PC-9 (cell line): ENCODE measurements at regions of chr9 and their contacts with region 1.

Region 1: GRCh38 chr9:113578882-113579282 is 115.4 kb downstream of the RGS3 start:
- DNase-seq: peak; percentile 91 to 92
- H3K4me3 ChIP-seq: peak overlapping the region; percentile 45; the same call in 1 of the 2 replicates
- H3K27ac ChIP-seq: peak overlapping the region; percentile 93
- H3K4me1 ChIP-seq: peaks cover 73% of the 10 kb centered on the region
- H3K27me3 ChIP-seq: no peaks in the 10 kb centered on the region
- CTCF ChIP-seq: no peak

Region 2: GRCh38 chr9:113221003-113221799 is 357.7 kb before region 1 on chr9 and contains the starts of genes FKBP15 and SLC31A1:
- CTCF ChIA-PET with region 1: interaction called, 3 read pairs
- POLR2A ChIA-PET with region 1: no interaction called
- intact Hi-C with region 1: loop called (anchors 5 kb)
- DNase-seq: peak; percentile 95 to 99
- H3K4me3 ChIP-seq: peak within 1 kb of the TSS; percentile 79
- H3K27ac ChIP-seq: peak within 1 kb of the TSS; percentile 51
- H3K4me1 ChIP-seq: peaks cover 29% of the 10 kb centered on the region
- H3K27me3 ChIP-seq: no peaks in the 10 kb centered on the region
- CTCF ChIP-seq: no peak
- total RNA-seq, gene FKBP15: 23.3 and 33.5 TPM in 2 replicates
- total RNA-seq, gene SLC31A1: 24.9 and 27.2 TPM in 2 replicates

Region 3: GRCh38 chr9:113340017-113340699 is 238.7 kb before region 1 on chr9 and contains the start of gene WDR31:
- CTCF ChIA-PET with region 1: no interaction called
- POLR2A ChIA-PET with region 1: no interaction called
- intact Hi-C with region 1: loop called (anchors 1 kb)
- DNase-seq: peak; percentile 68 to 93
- H3K4me3 ChIP-seq: peak within 1 kb of the TSS; percentile 80
- H3K27ac ChIP-seq: peak within 1 kb of the TSS; percentile 81
- H3K4me1 ChIP-seq: peaks cover 43% of the 10 kb centered on the region
- H3K27me3 ChIP-seq: no peaks in the 10 kb centered on the region
- CTCF ChIP-seq: no peak
- total RNA-seq, gene WDR31: 11.2 and 12.9 TPM in 2 replicates

Region 4: DNA sequence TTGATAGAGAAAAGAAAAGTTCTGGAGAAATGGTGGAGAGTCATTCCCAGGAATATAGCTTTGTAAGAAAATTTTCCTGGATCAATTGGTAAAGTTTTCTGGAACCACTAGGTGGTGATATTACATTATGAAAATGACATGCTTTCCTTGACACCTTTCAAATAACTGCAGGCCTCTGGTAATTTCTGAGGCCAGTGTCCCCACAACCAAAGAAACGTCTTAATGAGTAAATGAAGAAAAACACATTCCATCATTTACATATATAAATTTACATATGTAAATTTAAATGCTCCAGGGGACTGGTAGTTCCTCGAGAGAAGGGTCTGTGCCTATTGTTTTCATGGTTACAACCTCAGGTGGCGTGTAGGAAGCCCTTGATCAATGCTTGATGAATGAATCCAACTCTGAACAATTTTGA is 132.6 kb before region 1 on chr9:
- CTCF ChIA-PET with region 1: no interaction called
- POLR2A ChIA-PET with region 1: interaction called, 36 read pairs
- intact Hi-C with region 1: no loop called
- DNase-seq: no peak
- H3K4me3 ChIP-seq: no peak overlapping the region
- H3K27ac ChIP-seq: no peak overlapping the region
- H3K4me1 ChIP-seq: no peaks in the 10 kb centered on the region
- H3K27me3 ChIP-seq: no peaks in the 10 kb centered on the region
- CTCF ChIP-seq: peak; percentile 80

Region 5: GRCh38 chr9:113548221-113549041 is 30.5 kb before region 1 on chr9:
- CTCF ChIA-PET with region 1: no interaction called
- POLR2A ChIA-PET with region 1: interaction called, 3 read pairs
- intact Hi-C with region 1: loop called (anchors 1 kb)
- DNase-seq: peak in 1 of 2 experiments; percentile 82
- H3K4me3 ChIP-seq: no peak overlapping the region
- H3K27ac ChIP-seq: peak overlapping the region; percentile 38
- H3K4me1 ChIP-seq: peaks cover 11% of the 10 kb centered on the region
- H3K27me3 ChIP-seq: no peaks in the 10 kb centered on the region
- CTCF ChIP-seq: no peak

Region 6: GRCh38 chr9:113622600-113623400 is 43.9 kb after region 1 on chr9:
- CTCF ChIA-PET with region 1: no interaction called
- POLR2A ChIA-PET with region 1: no interaction called
- intact Hi-C with region 1: loop called (anchors 1 kb)
- DNase-seq: peak; percentile 86
- H3K4me3 ChIP-seq: no peak overlapping the region
- H3K27ac ChIP-seq: peak overlapping the region; percentile 56
- H3K4me1 ChIP-seq: peaks cover 42% of the 10 kb centered on the region
- H3K27me3 ChIP-seq: no peaks in the 10 kb centered on the region
- CTCF ChIP-seq: no peak

Region 7: GRCh38 chr9:113973851-113974413 is 395.1 kb after region 1 on chr9:
- CTCF ChIA-PET with region 1: no interaction called
- POLR2A ChIA-PET with region 1: no interaction called
- intact Hi-C with region 1: no loop called
- DNase-seq: no peak
- H3K4me3 ChIP-seq: no peak overlapping the region
- H3K27ac ChIP-seq: no peak overlapping the region
- H3K4me1 ChIP-seq: no peaks in the 10 kb centered on the region
- H3K27me3 ChIP-seq: peaks cover 62% of the 10 kb centered on the region
- CTCF ChIP-seq: no peak